Calu3 (cell line): ENCODE measurements at regions of chr16 and their contacts with region 1.

Region 1: DNA sequence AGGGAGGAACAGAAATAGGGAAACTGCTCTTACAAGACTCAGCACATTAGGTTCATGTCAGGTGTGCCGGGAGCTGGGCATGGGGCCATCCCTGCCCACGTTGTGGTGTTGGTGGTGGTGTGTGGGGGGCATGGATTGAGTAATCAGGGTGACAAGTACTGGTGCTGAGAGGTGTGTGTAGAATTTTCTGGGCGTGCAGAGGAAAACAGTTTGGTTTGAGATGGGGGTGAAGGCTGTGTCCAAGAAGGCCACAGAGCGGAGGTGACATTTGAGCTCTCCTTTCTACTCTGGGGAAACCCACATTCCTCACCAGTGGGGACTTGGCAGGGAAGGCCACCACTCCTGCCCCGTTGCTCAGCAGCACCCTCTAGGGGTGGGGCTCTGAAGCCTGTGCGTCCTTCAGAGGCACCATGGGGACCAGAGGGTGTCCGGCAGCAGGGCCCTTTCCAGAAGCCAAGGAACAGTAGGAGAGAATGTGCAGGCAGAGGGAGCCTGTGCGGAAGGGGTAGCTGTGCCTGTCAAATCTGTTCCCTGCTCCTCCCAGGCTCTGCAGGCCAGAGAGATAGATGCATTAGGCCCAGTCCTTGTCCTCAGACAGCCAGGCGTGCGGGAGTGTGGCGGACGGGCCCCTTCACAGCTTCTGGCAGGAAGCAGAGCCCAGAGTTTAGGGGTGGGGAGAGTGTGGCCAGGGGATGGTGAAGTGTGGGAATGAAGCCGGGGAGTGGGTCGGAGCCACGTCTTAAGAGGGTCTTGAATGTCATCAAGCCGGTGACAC is 48.7 kb upstream of the GSE1 start:
- DNase-seq: peak; percentile 75
- H3K4me3 Mint-ChIP-seq: no peak overlapping the region
- H3K27ac Mint-ChIP-seq: peak overlapping the region; percentile 5
- H3K4me1 Mint-ChIP-seq: peaks cover 14% of the 10 kb centered on the region
- H3K27me3 Mint-ChIP-seq: peaks cover 13% of the 10 kb centered on the region
- CTCF ChIP-seq: peak; percentile 85

Region 2: DNA sequence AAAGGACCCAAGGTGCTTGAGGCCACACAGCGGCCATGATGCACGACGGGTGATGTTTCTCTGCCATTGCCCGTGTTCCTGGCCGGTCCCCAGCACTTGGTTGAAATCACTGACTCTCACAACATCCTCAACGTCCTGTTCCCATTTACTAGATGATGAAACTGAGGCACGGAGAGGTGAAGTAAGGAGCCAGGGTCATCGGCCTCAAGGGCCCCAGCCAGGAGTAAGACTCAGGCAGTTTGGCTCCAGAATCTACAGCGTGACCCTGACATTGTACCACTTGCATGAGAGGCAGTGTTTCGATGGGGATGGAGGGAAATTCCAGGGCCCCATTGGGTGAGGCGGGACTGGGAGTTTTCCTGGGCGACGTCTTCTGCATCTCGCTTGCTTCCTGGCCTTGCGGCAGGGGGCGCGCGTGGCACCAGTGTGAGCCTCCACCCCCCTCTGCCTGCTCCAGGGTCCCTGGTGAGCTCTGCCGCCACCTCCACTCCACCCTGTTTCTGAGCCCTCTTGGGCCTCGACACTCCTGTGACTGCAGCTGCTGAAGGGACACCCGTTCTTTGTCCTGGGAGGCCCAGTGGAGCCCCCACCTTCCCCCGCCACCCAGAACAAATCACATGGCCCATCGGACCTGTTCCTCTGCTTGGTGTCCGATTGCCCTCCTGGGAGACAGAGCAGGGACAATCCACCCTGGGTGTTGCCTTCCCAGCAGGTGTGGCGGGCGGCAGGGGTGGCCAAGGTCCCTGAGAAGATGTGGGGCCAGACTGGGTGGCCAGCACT is 84.3 kb before region 1 on chr16:
- CTCF ChIA-PET with region 1: interaction called, 28 read pairs
- intact Hi-C with region 1: loop called (anchors 5 kb)
- DNase-seq: peak; percentile 86
- H3K4me3 Mint-ChIP-seq: no peak overlapping the region
- H3K27ac Mint-ChIP-seq: no peak overlapping the region
- H3K4me1 Mint-ChIP-seq: peaks cover 15% of the 10 kb centered on the region
- H3K27me3 Mint-ChIP-seq: peaks cover 46% of the 10 kb centered on the region
- CTCF ChIP-seq: peak; percentile 87